ENCODE measurements at regions of chr9 and their contacts with region 1.

Region 1: DNA sequence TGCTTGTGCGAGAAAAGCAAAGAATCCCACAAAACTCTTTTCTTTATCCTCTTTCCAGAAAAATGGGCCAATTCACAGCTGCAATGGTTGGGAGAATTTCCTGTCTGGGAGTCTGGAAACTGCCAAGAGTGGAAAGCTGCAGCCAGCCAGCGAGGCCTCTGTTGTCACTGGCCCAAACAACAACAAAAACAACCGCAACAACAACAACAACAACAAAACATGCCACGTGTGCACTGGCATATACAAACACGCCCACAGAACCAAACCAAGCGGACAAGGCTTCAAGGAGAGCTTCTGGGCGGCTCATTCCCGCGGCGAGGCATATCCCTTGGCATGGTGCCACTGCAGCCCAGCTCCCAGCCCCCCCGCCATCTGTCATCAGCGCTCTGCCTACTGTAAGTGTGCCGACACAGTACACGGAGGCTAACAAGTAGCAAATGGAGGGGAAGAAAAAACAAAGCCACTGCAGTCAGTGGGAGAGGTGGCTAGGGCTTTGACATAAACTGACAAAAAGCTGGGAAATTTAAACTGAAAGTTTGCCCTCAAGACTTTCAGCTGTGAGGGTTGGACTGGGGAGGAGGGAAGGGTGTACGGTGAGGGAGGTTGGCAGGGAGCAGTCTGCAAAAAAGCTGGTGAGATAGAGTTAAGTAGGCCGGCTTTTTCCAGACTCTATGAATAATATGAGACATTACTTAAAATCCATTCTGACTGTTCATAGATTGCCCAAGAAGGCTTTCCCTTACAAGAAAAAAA is 165.0 kb upstream of the ZNF462 start:
- DNase-seq: peak; percentile 77 to 91
- ATAC-seq: peak; percentile 79
- H3K4me3 ChIP-seq: peak overlapping the region; percentile 1 to 4
- H3K27ac ChIP-seq: no peak overlapping the region
- H3K4me1 ChIP-seq: no peaks in the 10 kb centered on the region
- H3K27me3 ChIP-seq: no peaks in the 10 kb centered on the region

Region 2: GRCh38 chr9:106771631-106772030 is 73.7 kb after region 1 on chr9:
- intact Hi-C with region 1: no loop called
- DNase-seq: no peak
- ATAC-seq: no peak
- H3K4me3 ChIP-seq: no peak overlapping the region
- H3K27ac ChIP-seq: no peak overlapping the region
- H3K4me1 ChIP-seq: no peaks in the 10 kb centered on the region
- H3K27me3 ChIP-seq: no peaks in the 10 kb centered on the region

Region 3: GRCh38 chr9:106862825-106863720 is 165.1 kb after region 1 on chr9 and contains the start of gene ZNF462:
- intact Hi-C with region 1: loop called in 1 of 2 experiments (anchors 10 kb)
- DNase-seq: peak; percentile 50 to 78
- ATAC-seq: peak; percentile 67
- H3K4me3 ChIP-seq: peak within 1 kb of the TSS; percentile 50 to 69
- H3K27ac ChIP-seq: peak within 1 kb of the TSS in 1 of 2 donors; percentile 66
- H3K4me1 ChIP-seq: no peaks in the 10 kb centered on the region
- H3K27me3 ChIP-seq: no peaks in the 10 kb centered on the region
- total RNA-seq, gene ZNF462: 15.1 to 24.0 TPM

Measured in aorta (tissue), 5 donors.